ENCODE measurements at regions of chr5 and their contacts with region 1.

Region 1: GRCh38 chr5:119105971-119106370 is 35.1 kb downstream of the DMXL1 start:
- DNase-seq: no peak
- ATAC-seq: no peak
- H3K4me3 ChIP-seq: no peak overlapping the region
- H3K4me3 Mint-ChIP-seq: no peak overlapping the region
- H3K27ac ChIP-seq: no peak overlapping the region
- H3K27ac Mint-ChIP-seq: no peak overlapping the region
- H3K4me1 ChIP-seq: no peaks in the 10 kb centered on the region
- H3K4me1 Mint-ChIP-seq: peaks cover 5% of the 10 kb centered on the region
- H3K27me3 ChIP-seq: no peaks in the 10 kb centered on the region
- H3K27me3 Mint-ChIP-seq: no peaks in the 10 kb centered on the region
- CTCF ChIP-seq: no peak

Region 2: DNA sequence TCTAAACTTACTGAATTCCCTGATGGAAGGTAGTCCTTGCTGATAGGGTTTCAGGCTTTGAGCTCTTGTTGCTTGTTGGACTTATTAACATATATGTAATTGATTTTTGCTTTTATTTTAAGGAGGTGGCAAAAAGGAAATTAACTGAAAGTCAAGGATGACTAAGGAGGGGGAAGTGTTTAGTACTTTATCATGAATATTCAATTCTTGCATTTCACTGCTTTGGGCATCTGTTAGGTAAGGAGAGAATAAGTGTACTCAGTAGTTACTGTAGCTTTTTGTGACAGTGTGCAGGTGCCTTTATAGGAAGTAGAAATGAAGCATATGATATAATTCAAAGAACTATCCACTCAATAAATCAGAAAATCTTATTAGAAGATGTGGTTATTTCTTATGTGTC is 12.0 kb after region 1 on chr5:
- CTCF ChIA-PET with region 1: no interaction called
- POLR2A ChIA-PET with region 1: no interaction called
- intact Hi-C with region 1: no loop called
- DNase-seq: no peak
- ATAC-seq: no peak
- H3K4me3 ChIP-seq: no peak overlapping the region
- H3K4me3 Mint-ChIP-seq: no peak overlapping the region
- H3K27ac ChIP-seq: peak overlapping the region in 1 of 2 donors; percentile 59
- H3K27ac Mint-ChIP-seq: no peak overlapping the region
- H3K4me1 ChIP-seq: no peaks in the 10 kb centered on the region
- H3K4me1 Mint-ChIP-seq: peaks cover 5% of the 10 kb centered on the region
- H3K27me3 ChIP-seq: no peaks in the 10 kb centered on the region
- H3K27me3 Mint-ChIP-seq: no peaks in the 10 kb centered on the region
- CTCF ChIP-seq: no peak

Region 3: GRCh38 chr5:119153629-119154028 is 47.7 kb after region 1 on chr5:
- CTCF ChIA-PET with region 1: no interaction called
- POLR2A ChIA-PET with region 1: no interaction called
- intact Hi-C with region 1: no loop called
- DNase-seq: no peak
- ATAC-seq: no peak
- H3K4me3 ChIP-seq: no peak overlapping the region
- H3K4me3 Mint-ChIP-seq: no peak overlapping the region
- H3K27ac ChIP-seq: no peak overlapping the region
- H3K27ac Mint-ChIP-seq: no peak overlapping the region
- H3K4me1 ChIP-seq: no peaks in the 10 kb centered on the region
- H3K4me1 Mint-ChIP-seq: peaks cover 5% of the 10 kb centered on the region
- H3K27me3 ChIP-seq: no peaks in the 10 kb centered on the region
- H3K27me3 Mint-ChIP-seq: no peaks in the 10 kb centered on the region
- CTCF ChIP-seq: no peak

Region 4: DNA sequence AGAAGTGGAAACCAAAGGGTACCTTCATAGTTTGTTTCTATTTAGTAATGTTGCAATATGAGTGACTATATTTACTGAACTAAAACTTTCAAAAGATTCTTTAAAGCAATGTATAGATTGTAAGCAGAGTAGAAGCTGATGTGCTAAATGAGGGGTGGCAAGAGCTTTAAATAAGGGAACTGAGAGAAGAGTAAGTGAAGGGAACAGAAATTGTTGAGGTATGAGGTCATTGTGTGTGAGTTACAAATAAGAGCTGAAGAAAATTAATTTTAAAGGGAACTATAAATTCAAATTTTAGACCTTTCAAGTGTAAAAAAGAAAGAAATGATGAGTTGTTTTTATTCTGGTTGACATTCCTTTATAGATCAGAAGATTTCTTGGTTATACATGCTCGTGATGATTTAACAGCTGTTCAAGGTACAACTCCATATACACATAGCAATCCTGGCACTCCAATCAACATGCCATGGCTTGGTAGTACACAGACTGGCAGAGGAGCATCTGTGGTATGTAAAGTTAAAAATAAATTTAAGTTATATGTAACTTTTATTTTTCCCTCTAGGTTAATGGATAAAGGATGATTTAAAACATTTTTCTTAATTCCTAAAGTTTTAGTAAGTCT is 114.7 kb after region 1 on chr5:
- CTCF ChIA-PET with region 1: no interaction called
- POLR2A ChIA-PET with region 1: no interaction called
- intact Hi-C with region 1: loop called (anchors 10 kb)
- DNase-seq: peak; percentile 63
- ATAC-seq: peak; percentile 92
- H3K4me3 ChIP-seq: no peak overlapping the region
- H3K4me3 Mint-ChIP-seq: peak overlapping the region; percentile 21
- H3K27ac ChIP-seq: peak overlapping the region; percentile 37 to 72
- H3K27ac Mint-ChIP-seq: peak overlapping the region; percentile 16
- H3K4me1 ChIP-seq: peaks cover 15 to 17% of the 10 kb centered on the region in 2 donors
- H3K4me1 Mint-ChIP-seq: peaks cover 21% of the 10 kb centered on the region
- H3K27me3 ChIP-seq: no peaks in the 10 kb centered on the region
- H3K27me3 Mint-ChIP-seq: no peaks in the 10 kb centered on the region
- CTCF ChIP-seq: no peak

Region 5: GRCh38 chr5:119290161-119290569 is 184.2 kb after region 1 on chr5:
- CTCF ChIA-PET with region 1: no interaction called
- POLR2A ChIA-PET with region 1: no interaction called
- intact Hi-C with region 1: no loop called
- DNase-seq: peak; percentile 78
- ATAC-seq: peak; percentile 88
- H3K4me3 ChIP-seq: peak overlapping the region in 3 of 5 experiments; percentile 13 to 20 (median 18)
- H3K4me3 Mint-ChIP-seq: peak overlapping the region; percentile 65
- H3K27ac ChIP-seq: peak overlapping the region; percentile 35 to 74
- H3K27ac Mint-ChIP-seq: peak overlapping the region; percentile 90
- H3K4me1 ChIP-seq: peaks cover 70 to 76% of the 10 kb centered on the region in 2 donors
- H3K4me1 Mint-ChIP-seq: peaks cover 83% of the 10 kb centered on the region
- H3K27me3 ChIP-seq: no peaks in the 10 kb centered on the region
- H3K27me3 Mint-ChIP-seq: no peaks in the 10 kb centered on the region
- CTCF ChIP-seq: no peak